ENCODE measurements at regions of chr15 and their contacts with region 1.

Region 1: GRCh38 chr15:48459571-48460470 is 128.6 kb downstream of the DUT start:
- DNase-seq: peak; percentile 88
- ATAC-seq: peak; percentile 64
- H3K4me3 ChIP-seq: no peak overlapping the region; the same call in 1 of the 2 replicates
- H3K27ac ChIP-seq: peak overlapping the region; percentile 99
- H3K4me1 ChIP-seq: peaks cover 51% of the 10 kb centered on the region
- H3K27me3 ChIP-seq: no peaks in the 10 kb centered on the region
- CTCF ChIP-seq: no peak

Region 2: GRCh38 chr15:48358229-48358641 is 101.6 kb before region 1 on chr15:
- CTCF ChIA-PET with region 1: interaction called, 3 read pairs
- POLR2A ChIA-PET with region 1: no interaction called
- intact Hi-C with region 1: loop called (anchors 1 kb)
- DNase-seq: peak; percentile 49
- ATAC-seq: peak; percentile 73
- H3K4me3 ChIP-seq: peak overlapping the region; percentile 32; the same call in 1 of the 2 replicates
- H3K27ac ChIP-seq: peak overlapping the region; percentile 68
- H3K4me1 ChIP-seq: peaks cover 13% of the 10 kb centered on the region
- H3K27me3 ChIP-seq: no peaks in the 10 kb centered on the region
- CTCF ChIP-seq: peak; percentile 78

Region 3: GRCh38 chr15:48415036-48415886 is 44.6 kb before region 1 on chr15:
- CTCF ChIA-PET with region 1: no interaction called
- POLR2A ChIA-PET with region 1: no interaction called
- intact Hi-C with region 1: loop called (anchors 5 kb)
- DNase-seq: peak; percentile 89
- ATAC-seq: peak; percentile 96
- H3K4me3 ChIP-seq: peak overlapping the region; percentile 40; the same call in 1 of the 2 replicates
- H3K27ac ChIP-seq: peak overlapping the region; percentile 92
- H3K4me1 ChIP-seq: peaks cover 26% of the 10 kb centered on the region
- H3K27me3 ChIP-seq: no peaks in the 10 kb centered on the region
- CTCF ChIP-seq: no peak

Region 4: GRCh38 chr15:48477795-48478360 is 18.1 kb after region 1 on chr15:
- CTCF ChIA-PET with region 1: no interaction called
- POLR2A ChIA-PET with region 1: interaction called, 6 read pairs
- intact Hi-C with region 1: loop called (anchors 1 kb)
- DNase-seq: no peak
- ATAC-seq: no peak
- H3K4me3 ChIP-seq: no peak overlapping the region
- H3K27ac ChIP-seq: no peak overlapping the region
- H3K4me1 ChIP-seq: peaks cover 18% of the 10 kb centered on the region
- H3K27me3 ChIP-seq: no peaks in the 10 kb centered on the region
- CTCF ChIP-seq: no peak